MCF 10A (cell line): ENCODE measurements at regions of chr7 and their contacts with region 1.

Region 1: DNA sequence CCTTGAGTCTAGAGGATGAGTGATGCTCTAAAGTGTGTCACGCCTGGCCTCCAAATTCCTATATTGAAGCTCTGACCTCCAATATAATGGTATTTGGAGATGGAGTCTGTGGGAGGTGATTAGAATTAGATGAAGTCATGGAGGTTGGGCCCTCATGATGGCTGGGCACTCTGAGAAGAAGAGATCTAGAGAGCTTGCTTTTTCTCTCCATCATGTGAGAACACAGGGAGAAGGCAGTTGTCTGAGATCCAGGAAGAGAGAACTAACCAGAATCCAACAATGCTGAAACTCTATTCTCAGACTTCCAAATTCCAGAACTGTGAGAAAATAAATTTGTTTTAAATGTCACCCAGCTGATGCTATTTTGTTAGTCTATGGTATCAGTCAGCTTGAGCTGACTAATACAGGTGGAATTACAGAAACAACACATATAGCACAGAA is 15.1 kb downstream of the RNF216 start:
- DNase-seq: no peak
- H3K4me3 Mint-ChIP-seq: no peak overlapping the region
- H3K27ac Mint-ChIP-seq: peak overlapping the region; percentile 3
- H3K4me1 Mint-ChIP-seq: peaks cover 23% of the 10 kb centered on the region
- H3K27me3 Mint-ChIP-seq: no peaks in the 10 kb centered on the region
- CTCF ChIP-seq: no peak

Region 2: DNA sequence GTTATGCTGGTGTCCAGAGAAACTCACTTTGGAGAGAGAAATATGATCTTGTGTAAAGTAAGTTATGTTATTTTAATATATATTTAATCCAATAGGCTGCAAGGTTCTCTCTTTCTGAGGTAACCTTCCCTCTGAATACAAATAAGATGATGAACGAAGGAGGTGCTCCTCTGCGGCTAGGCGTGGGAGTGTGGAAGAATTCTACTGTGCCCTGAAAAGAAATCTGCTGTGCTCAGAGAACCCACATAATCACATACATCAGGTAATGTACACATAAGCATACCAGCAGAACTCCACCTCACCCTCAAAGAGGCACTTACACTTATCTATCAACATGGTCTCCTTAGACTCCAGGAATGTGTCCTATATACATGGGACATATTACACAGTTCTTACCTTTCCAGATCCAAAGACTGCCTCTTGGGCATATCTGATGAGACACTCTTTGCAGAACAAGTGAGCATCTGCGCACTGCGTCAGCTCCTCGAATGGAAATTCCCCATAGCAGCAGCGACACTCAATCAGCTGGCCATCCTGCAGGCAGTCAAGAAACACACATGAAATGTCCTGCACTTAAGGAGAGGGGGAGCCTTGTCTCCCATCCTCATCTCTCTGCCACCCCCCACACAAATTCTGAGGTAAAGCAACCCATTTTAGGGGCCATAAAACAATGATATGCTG is 51.5 kb before region 1 on chr7:
- CTCF ChIA-PET with region 1: no interaction called
- POLR2A ChIA-PET with region 1: no interaction called
- intact Hi-C with region 1: no loop called
- DNase-seq: no peak
- H3K4me3 Mint-ChIP-seq: no peak overlapping the region
- H3K27ac Mint-ChIP-seq: no peak overlapping the region
- H3K4me1 Mint-ChIP-seq: no peaks in the 10 kb centered on the region
- H3K27me3 Mint-ChIP-seq: no peaks in the 10 kb centered on the region
- CTCF ChIP-seq: no peak

Region 3: DNA sequence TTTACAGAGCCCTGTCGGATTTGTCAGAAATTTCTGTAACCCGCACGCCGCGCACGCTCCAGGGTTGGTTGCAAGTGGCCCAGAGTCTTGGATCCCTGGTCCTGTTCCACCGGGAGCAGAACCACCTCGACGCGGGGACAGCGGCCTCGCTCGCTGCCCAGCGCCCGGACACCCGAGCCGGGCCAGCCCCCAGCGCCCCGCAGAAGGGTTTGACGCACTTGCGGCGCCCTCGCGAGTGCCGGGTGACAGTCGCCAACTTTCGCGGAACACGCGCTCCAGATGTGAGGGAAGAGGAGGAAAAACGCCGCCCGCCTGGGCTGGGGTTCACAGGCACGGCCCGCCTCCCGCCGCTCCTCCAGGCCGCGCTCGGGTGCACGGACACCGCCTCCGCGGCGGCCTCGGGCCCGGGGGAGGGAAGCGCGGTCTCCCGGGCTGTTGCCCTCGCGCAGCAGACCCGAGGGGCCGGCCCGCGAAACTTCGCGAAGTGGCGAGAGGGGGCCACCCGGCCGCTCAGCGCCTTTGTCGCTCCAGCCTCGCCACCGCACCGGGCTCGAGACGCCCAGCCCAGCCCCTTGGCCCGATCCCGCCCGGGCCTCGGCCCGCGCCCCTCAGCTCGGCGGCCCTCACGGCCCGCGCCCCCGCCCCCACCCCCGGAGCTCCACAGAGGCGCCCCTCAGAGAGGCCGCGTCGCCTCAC is 14.6 kb after region 1 on chr7:
- CTCF ChIA-PET with region 1: interaction called, 11 read pairs
- POLR2A ChIA-PET with region 1: interaction called, 3 read pairs
- intact Hi-C with region 1: no loop called
- DNase-seq: peak; percentile 26
- H3K4me3 Mint-ChIP-seq: peak overlapping the region; percentile 81
- H3K27ac Mint-ChIP-seq: peak overlapping the region; percentile 69
- H3K4me1 Mint-ChIP-seq: peaks cover 11% of the 10 kb centered on the region
- H3K27me3 Mint-ChIP-seq: no peaks in the 10 kb centered on the region
- CTCF ChIP-seq: no peak

Region 4: DNA sequence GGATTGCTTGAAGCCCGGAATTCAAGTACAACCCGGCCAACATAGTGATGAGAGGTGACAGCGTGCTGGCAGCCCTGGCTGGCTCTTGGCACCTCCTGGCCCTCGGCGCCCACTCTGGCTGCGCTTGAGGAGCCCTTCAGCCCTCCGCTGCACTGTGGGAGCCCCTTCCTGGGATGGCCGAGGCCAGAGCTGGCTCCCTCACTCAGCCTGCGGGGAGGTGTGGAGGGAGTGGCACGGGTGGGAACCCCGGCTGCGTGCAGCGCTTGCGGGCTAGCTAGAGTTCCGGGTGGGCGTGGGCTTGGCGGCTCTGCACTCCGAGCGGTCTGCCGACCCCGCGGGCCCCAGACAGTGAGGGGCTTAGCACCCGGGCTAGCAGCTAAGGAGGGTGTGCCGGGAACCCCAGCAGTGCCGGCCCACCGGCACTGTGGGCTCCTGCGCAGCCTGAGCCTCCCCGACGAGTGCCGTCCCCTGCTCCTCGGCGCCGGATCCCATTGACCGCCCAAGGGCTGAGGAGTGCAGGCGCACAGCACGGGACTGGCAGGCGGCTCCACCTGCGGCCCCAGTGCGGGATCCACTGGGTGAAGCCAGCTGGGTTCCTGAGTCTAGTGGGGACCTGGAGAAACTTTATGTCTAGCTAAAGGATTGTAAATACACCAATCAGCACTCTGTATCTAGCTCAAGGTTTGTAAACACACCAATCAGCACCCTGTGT is 27.2 kb after region 1 on chr7:
- CTCF ChIA-PET with region 1: no interaction called
- POLR2A ChIA-PET with region 1: no interaction called
- intact Hi-C with region 1: no loop called
- DNase-seq: no peak
- H3K4me3 Mint-ChIP-seq: no peak overlapping the region
- H3K27ac Mint-ChIP-seq: no peak overlapping the region
- H3K4me1 Mint-ChIP-seq: no peaks in the 10 kb centered on the region
- H3K27me3 Mint-ChIP-seq: no peaks in the 10 kb centered on the region
- CTCF ChIP-seq: no peak